Activated naive CD8-positive, alpha-beta T cell treated with anti-CD3 and anti-CD28 coated beads, Interleukin-2, amount 10 ng/mL, durations not matched to agents 7 days and 5 days (primary cell): ENCODE measurements at regions of chr14 and their contacts with region 1.

Region 1: DNA sequence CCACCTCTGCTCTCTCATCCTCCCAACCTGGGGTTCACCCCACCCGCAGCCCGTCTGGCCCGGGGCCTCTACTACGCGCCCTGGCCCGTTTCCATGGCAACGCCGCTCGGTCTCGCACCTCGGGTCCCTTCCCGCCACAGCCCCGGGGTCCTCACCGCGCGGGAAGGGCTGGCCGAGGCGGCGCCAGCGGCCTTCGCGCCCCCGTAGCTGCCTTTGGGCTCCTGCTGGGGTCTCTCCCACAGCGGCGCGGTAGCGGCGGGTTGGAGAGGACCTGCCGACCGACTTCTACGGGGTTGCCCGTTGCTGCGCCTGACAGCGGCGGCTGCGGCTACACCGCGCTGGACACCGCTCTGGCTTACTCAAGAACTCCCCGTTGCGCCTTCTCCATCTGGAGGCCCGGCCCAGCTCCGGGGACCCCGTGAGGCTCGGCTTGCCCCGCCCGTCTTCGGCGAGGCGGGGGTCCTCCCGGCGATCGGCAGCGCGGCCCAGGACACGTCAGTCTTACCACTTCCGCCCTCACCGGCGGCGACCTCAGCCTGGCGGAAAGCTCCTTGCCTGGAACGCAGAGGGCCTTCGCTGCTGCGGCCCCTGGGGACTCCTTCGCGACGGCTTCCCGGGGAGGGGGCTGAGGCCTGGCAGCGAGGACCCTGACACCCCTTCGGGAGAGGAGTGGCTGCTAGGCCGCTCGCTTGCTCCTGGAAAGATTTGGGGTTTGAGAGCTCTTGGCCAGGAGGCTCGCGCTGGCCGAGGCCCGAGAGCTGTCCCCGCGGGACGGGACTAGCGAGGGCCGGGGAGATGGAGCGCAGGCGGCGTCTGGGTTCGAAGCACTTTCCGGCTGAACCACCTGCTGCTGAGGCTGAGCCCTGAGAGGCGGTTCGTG is at the start of gene TM9SF1:
- DNase-seq: peak; percentile 93
- ATAC-seq: peak; percentile 93
- H3K4me3 Mint-ChIP-seq: peak within 1 kb of the TSS; percentile 97
- H3K27ac Mint-ChIP-seq: peak within 1 kb of the TSS; percentile 96
- H3K4me1 Mint-ChIP-seq: peaks cover 42% of the 10 kb centered on the region
- H3K27me3 Mint-ChIP-seq: no peaks in the 10 kb centered on the region
- total RNA-seq, gene TM9SF1: 28.9 to 29.6 TPM

Region 2: GRCh38 chr14:24135834-24136542 is 59.4 kb before region 1 on chr14 and contains the start of gene PSME1:
- POLR2A ChIA-PET with region 1: interaction called, 19 read pairs
- DNase-seq: peak; percentile 97
- ATAC-seq: peak; percentile 87
- H3K4me3 Mint-ChIP-seq: peak within 1 kb of the TSS; percentile 96
- H3K27ac Mint-ChIP-seq: peak within 1 kb of the TSS; percentile 94
- H3K4me1 Mint-ChIP-seq: peaks cover 51% of the 10 kb centered on the region
- H3K27me3 Mint-ChIP-seq: no peaks in the 10 kb centered on the region
- total RNA-seq, gene PSME1: 430 to 443 TPM

Region 3: GRCh38 chr14:24141097-24141880 is 54.1 kb before region 1 on chr14 and contains the start of gene EMC9:
- POLR2A ChIA-PET with region 1: interaction called, 19 read pairs
- DNase-seq: peak; percentile 96
- ATAC-seq: peak; percentile 91
- H3K4me3 Mint-ChIP-seq: peak within 1 kb of the TSS; percentile 100
- H3K27ac Mint-ChIP-seq: peak within 1 kb of the TSS; percentile 98
- H3K4me1 Mint-ChIP-seq: peaks cover 63% of the 10 kb centered on the region
- H3K27me3 Mint-ChIP-seq: no peaks in the 10 kb centered on the region
- total RNA-seq, gene EMC9: 41.6 to 43.9 TPM

Region 4: GRCh38 chr14:24146978-24147760 is 48.3 kb before region 1 on chr14 and contains the start of gene RNF31:
- POLR2A ChIA-PET with region 1: interaction called, 14 read pairs
- DNase-seq: peak; percentile 95
- ATAC-seq: peak; percentile 82
- H3K4me3 Mint-ChIP-seq: peak within 1 kb of the TSS; percentile 94
- H3K27ac Mint-ChIP-seq: peak within 1 kb of the TSS; percentile 96
- H3K4me1 Mint-ChIP-seq: peaks cover 54% of the 10 kb centered on the region
- H3K27me3 Mint-ChIP-seq: no peaks in the 10 kb centered on the region
- total RNA-seq, gene RNF31: 131 to 153 TPM

Region 5: DNA sequence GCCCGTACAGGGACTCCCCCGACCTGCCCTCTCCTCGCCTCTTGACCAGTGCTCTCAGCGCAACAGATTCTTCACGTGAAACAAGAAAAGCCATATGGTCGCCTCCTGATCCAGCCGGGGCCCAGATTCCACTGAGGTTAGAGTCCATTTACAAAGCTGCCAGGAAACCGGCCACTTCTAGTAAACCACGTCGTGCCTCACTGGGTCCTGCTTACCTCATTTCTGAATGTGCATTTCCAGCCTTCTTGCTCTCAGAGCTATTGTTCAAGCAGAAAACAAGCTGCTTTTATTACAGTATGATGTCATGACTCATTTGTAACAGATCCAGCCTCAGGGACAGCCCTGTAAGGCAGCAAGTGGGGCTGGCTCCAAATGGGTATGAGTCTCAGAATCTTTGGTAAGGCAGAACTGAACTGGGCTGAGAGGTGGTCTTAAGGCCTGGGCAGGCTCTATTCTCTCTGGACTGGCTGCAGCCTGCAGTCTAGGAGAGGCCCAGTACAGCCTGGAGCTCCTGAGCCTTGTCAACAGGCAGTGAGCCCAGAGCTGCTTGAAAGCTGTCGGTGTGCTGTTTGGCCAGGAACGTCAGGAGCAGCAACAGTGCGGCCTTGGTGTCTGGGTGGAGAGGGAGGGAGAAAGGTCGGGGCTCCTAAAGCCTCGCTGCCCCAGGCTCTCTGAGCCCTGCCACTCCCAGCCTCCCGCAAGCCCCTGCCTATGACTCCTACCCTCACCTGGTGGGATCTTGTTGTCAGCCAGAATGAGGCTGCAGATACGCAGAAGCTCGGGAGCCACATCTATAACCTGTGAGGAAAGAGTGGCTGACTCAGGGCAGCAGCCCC is 15.3 kb before region 1 on chr14:
- POLR2A ChIA-PET with region 1: interaction called, 11 read pairs
- DNase-seq: no peak
- ATAC-seq: no peak
- H3K4me3 Mint-ChIP-seq: no peak overlapping the region
- H3K27ac Mint-ChIP-seq: peak overlapping the region; percentile 25
- H3K4me1 Mint-ChIP-seq: peaks cover under 1% of the 10 kb centered on the region
- H3K27me3 Mint-ChIP-seq: no peaks in the 10 kb centered on the region

Region 6: GRCh38 chr14:24215495-24216344 is 20.3 kb after region 1 on chr14 and contains the start of gene MDP1:
- POLR2A ChIA-PET with region 1: interaction called, 52 read pairs
- DNase-seq: peak; percentile 85
- ATAC-seq: peak; percentile 73
- H3K4me3 Mint-ChIP-seq: peak within 1 kb of the TSS; percentile 93
- H3K27ac Mint-ChIP-seq: peak within 1 kb of the TSS; percentile 98
- H3K4me1 Mint-ChIP-seq: peaks cover 38% of the 10 kb centered on the region
- H3K27me3 Mint-ChIP-seq: no peaks in the 10 kb centered on the region
- total RNA-seq, gene MDP1: 11.9 to 15.4 TPM